CD8-positive, alpha-beta T cell (primary cell): ENCODE measurements at regions of chr12 and their contacts with region 1.

Region 1: GRCh38 chr12:111841750-111842555 is at the start of gene MAPKAPK5:
- DNase-seq: peak; percentile 96 to 100 (median 98)
- ATAC-seq: peak; percentile 87
- H3K4me3 ChIP-seq: peak within 1 kb of the TSS; percentile 79 to 91
- H3K4me3 Mint-ChIP-seq: peak within 1 kb of the TSS; percentile 98
- H3K27ac ChIP-seq: peak within 1 kb of the TSS; percentile 82 to 91
- H3K27ac Mint-ChIP-seq: peak within 1 kb of the TSS; percentile 99
- H3K4me1 ChIP-seq: peaks cover 42% of the 10 kb centered on the region
- H3K4me1 Mint-ChIP-seq: peaks cover 64% of the 10 kb centered on the region
- H3K27me3 ChIP-seq: no peaks in the 10 kb centered on the region
- H3K27me3 Mint-ChIP-seq: no peaks in the 10 kb centered on the region
- CTCF ChIP-seq: no peak
- total RNA-seq, gene MAPKAPK5: 65.6 to 68.0 TPM

Region 2: GRCh38 chr12:110468212-110469048 is 1373.5 kb before region 1 on chr12 and contains the starts of genes FAM216A and GPN3:
- CTCF ChIA-PET with region 1: no interaction called
- POLR2A ChIA-PET with region 1: no interaction called
- intact Hi-C with region 1: loop called in 1 of 2 experiments (anchors 5 kb)
- DNase-seq: peak; percentile 89 to 98 (median 95)
- ATAC-seq: peak; percentile 89
- H3K4me3 ChIP-seq: peak within 1 kb of the TSS; percentile 90 to 96
- H3K4me3 Mint-ChIP-seq: peak within 1 kb of the TSS; percentile 99
- H3K27ac ChIP-seq: peak within 1 kb of the TSS; percentile 74 to 87
- H3K27ac Mint-ChIP-seq: peak within 1 kb of the TSS; percentile 95
- H3K4me1 ChIP-seq: peaks cover 23% of the 10 kb centered on the region
- H3K4me1 Mint-ChIP-seq: peaks cover 43% of the 10 kb centered on the region
- H3K27me3 ChIP-seq: no peaks in the 10 kb centered on the region
- H3K27me3 Mint-ChIP-seq: no peaks in the 10 kb centered on the region
- CTCF ChIP-seq: no peak
- total RNA-seq, gene FAM216A: 3.5 to 4.5 TPM
- total RNA-seq, gene GPN3: 5.9 to 6.2 TPM

Region 3: DNA sequence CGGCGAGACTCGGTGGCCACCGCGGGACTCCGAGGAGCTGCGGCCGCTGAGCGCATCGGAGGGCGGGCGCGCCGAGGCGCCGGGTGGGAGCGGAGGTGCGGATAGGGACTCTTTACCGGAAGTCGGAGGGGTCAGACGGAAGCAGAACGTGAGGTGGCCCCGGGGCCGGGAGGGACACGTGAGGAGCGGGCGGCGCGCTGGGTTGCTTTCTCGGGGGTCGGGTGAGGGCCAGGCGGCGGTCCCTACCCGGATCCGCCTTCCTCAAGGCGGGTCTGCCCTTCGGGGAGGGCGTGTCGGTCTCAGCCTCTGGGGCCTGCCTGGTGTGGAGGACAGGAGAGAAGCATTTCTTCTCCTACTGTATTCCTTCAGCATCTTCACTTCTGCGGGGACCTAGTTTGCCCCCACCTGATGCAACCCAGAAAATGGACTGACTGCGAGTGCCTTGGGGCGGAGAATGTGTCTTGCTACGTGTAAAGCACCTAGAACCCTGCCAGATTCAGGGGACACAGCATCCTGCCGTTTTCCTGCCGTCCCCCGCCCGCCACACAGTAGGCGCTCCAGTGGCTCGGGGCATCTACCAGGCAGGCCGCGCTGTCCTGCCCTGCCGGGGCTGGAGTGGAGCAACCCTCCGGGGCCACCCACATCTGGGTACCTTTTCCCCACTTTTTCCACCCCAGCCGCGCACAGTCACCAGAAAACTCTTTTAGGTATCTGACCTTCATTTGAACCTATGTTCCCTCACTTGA is 242.3 kb before region 1 on chr12:
- CTCF ChIA-PET with region 1: no interaction called
- POLR2A ChIA-PET with region 1: no interaction called
- intact Hi-C with region 1: loop called (anchors 1 to 2 kb)
- DNase-seq: peak; percentile 70 to 95 (median 87)
- ATAC-seq: peak; percentile 75
- H3K4me3 ChIP-seq: peak overlapping the region; percentile 68 to 97
- H3K4me3 Mint-ChIP-seq: peak overlapping the region; percentile 90
- H3K27ac ChIP-seq: peak overlapping the region; percentile 72 to 77
- H3K27ac Mint-ChIP-seq: peak overlapping the region; percentile 91
- H3K4me1 ChIP-seq: peaks cover 20% of the 10 kb centered on the region
- H3K4me1 Mint-ChIP-seq: peaks cover 34% of the 10 kb centered on the region
- H3K27me3 ChIP-seq: no peaks in the 10 kb centered on the region
- H3K27me3 Mint-ChIP-seq: no peaks in the 10 kb centered on the region
- CTCF ChIP-seq: no peak

Region 4: GRCh38 chr12:111942557-111942956 is 100.6 kb after region 1 on chr12:
- CTCF ChIA-PET with region 1: no interaction called
- POLR2A ChIA-PET with region 1: no interaction called
- intact Hi-C with region 1: loop called in 1 of 2 experiments (anchors 5 kb)
- DNase-seq: no peak
- ATAC-seq: no peak
- H3K4me3 ChIP-seq: no peak overlapping the region
- H3K4me3 Mint-ChIP-seq: no peak overlapping the region
- H3K27ac ChIP-seq: no peak overlapping the region
- H3K27ac Mint-ChIP-seq: no peak overlapping the region
- H3K4me1 ChIP-seq: no peaks in the 10 kb centered on the region
- H3K4me1 Mint-ChIP-seq: peaks cover 13% of the 10 kb centered on the region
- H3K27me3 ChIP-seq: no peaks in the 10 kb centered on the region
- H3K27me3 Mint-ChIP-seq: no peaks in the 10 kb centered on the region
- CTCF ChIP-seq: no peak

Region 5: DNA sequence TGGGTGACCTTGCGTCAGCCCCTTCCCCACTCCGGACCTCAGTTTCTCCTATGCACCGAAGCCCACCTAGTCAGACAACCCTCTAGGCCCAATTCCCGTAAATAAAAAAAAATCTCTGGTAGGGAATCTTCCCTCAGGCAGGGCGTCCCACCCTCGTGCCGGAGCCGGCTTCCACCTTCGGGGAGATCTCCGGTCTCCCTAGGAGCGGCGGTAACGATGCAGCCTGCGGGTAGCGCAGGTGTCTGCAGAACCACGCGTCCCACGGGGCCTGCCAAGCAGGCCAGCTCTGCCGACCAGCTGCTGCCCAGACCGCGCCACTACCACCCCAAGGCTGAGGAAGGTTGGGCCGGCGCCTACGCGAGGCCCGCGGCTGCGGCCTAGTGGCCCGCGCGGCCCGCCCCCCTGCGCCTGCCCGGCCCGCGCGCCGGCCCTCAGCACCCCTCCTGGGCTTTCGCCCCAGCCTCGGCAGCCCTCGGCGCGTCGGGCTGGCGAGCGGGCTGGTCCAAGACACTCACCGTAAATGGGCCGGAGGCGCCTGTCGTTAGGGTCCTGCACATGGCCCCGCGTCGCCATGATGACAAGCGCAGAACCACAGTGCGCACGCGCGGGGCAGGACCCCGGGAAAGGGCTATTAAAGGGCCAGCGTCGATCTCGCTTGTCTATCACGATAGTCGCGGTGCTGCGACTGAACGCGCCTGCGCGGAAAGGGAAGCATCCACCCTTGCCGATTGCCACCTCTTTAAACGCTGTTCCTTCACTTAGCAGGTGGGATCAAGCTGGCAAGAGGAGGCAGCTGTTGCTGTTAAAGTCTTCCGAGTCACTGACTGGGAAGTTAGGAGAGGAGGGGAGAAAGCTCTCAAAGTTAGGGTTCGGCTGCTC is 266.5 kb after region 1 on chr12 and contains the start of gene NAA25:
- CTCF ChIA-PET with region 1: no interaction called
- POLR2A ChIA-PET with region 1: no interaction called
- intact Hi-C with region 1: loop called (anchors 1 to 2 kb)
- DNase-seq: peak; percentile 66 to 92 (median 87)
- ATAC-seq: peak; percentile 80
- H3K4me3 ChIP-seq: peak within 1 kb of the TSS; percentile 91 to 100
- H3K4me3 Mint-ChIP-seq: peak within 1 kb of the TSS; percentile 97
- H3K27ac ChIP-seq: peak within 1 kb of the TSS; percentile 80 to 92
- H3K27ac Mint-ChIP-seq: peak within 1 kb of the TSS; percentile 96
- H3K4me1 ChIP-seq: peaks cover 35% of the 10 kb centered on the region
- H3K4me1 Mint-ChIP-seq: peaks cover 44% of the 10 kb centered on the region
- H3K27me3 ChIP-seq: no peaks in the 10 kb centered on the region
- H3K27me3 Mint-ChIP-seq: no peaks in the 10 kb centered on the region
- CTCF ChIP-seq: no peak
- total RNA-seq, gene NAA25: 35.1 to 35.3 TPM

Region 6: GRCh38 chr12:112409064-112409905 is 567.3 kb after region 1 on chr12 and contains the start of gene RPL6:
- CTCF ChIA-PET with region 1: no interaction called
- POLR2A ChIA-PET with region 1: no interaction called
- intact Hi-C with region 1: loop called (anchors 1 to 5 kb)
- DNase-seq: peak; percentile 56 to 93 (median 75)
- ATAC-seq: peak; percentile 81
- H3K4me3 ChIP-seq: peak within 1 kb of the TSS; percentile 83 to 89
- H3K4me3 Mint-ChIP-seq: peak within 1 kb of the TSS; percentile 100
- H3K27ac ChIP-seq: peak within 1 kb of the TSS; percentile 87 to 92
- H3K27ac Mint-ChIP-seq: peak within 1 kb of the TSS; percentile 100
- H3K4me1 ChIP-seq: peaks cover 28% of the 10 kb centered on the region
- H3K4me1 Mint-ChIP-seq: peaks cover 38% of the 10 kb centered on the region
- H3K27me3 ChIP-seq: no peaks in the 10 kb centered on the region
- H3K27me3 Mint-ChIP-seq: no peaks in the 10 kb centered on the region
- CTCF ChIP-seq: no peak
- total RNA-seq, gene RPL6: 1,700 to 1,770 TPM